ENCODE measurements at regions of chr2 and their contacts with region 1.

Region 1: DNA sequence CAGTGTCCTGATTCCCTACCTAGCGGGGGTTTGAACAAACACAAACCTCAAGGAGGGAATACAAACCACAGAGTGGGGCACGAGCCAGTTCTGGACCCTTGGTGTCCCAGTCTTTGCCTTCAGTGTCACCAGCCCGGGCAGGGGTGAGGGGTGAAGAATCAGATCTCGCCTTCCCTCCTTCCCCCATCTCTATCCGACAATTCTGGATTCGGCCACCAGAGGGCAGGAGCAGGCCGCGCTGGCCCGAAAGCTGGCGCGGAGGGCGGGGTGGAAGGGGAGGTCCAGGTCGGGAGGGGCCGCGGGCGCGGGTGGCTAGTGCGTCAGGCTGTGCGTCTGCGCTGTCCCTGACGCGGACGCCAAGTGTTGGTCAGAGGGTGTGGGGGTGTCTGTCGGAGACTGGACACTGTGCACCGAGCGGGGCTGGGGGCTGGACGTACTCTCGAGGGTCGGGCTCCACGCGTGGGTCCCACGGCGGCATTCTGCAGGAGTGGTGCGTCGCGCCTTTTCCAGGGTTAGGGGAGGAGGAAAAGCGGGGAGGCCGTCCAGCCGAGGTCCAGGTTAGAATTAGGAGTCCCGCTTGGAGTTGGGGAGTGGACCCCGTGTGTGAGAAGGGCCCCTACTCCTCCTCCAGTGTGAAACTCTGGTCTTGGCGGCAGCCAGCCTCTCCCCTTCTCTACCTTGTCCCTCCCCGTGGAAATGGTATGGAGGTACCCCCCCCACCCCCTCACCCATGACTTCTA is 2.9 kb upstream of the CRYBA2 start:
- DNase-seq: peak in 1 of 2 experiments; percentile 99
- H3K4me3 ChIP-seq: peak overlapping the region in 3 of 4 experiments; percentile 27 to 49 (median 34); a peak in 4 of 8 replicates
- H3K27ac ChIP-seq: no peak overlapping the region
- H3K4me1 ChIP-seq: peaks cover 0 to 43% (median 26%) of the 10 kb centered on the region in 4 experiments; a peak in 6 of 7 replicates
- H3K27me3 ChIP-seq: peaks cover 98 to 100% (median 99%) of the 10 kb centered on the region in 4 experiments
- CTCF ChIP-seq: peak in 2 of 3 experiments; percentile 88; a peak in 3 of 4 replicates
- EP300 ChIP-seq: 0 out of 3 replicates have a peak, but pooled peaks of 1 of the 2 experiments have one; percentile 20
- POLR2A ChIP-seq: no peak
- RAD21 ChIP-seq: peak; percentile 79 to 89

Region 2: GRCh38 chr2:218885981-218886947 is 109.9 kb before region 1 on chr2:
- CTCF ChIA-PET with region 1: interaction called, 11 read pairs
- POLR2A ChIA-PET with region 1: interaction called, 3 read pairs
- DNase-seq: no peak
- H3K4me3 ChIP-seq: no peak overlapping the region
- H3K27ac ChIP-seq: no peak overlapping the region
- H3K4me1 ChIP-seq: peaks cover 0 to 4% (median 2%) of the 10 kb centered on the region in 4 experiments; a peak in 4 of 7 replicates
- H3K27me3 ChIP-seq: peaks cover 76 to 93% (median 90%) of the 10 kb centered on the region in 4 experiments
- CTCF ChIP-seq: no peak
- EP300 ChIP-seq: no peak
- POLR2A ChIP-seq: no peak
- RAD21 ChIP-seq: no peak

Region 3: GRCh38 chr2:219109471-219109870 is 113.3 kb after region 1 on chr2:
- CTCF ChIA-PET with region 1: no interaction called
- POLR2A ChIA-PET with region 1: no interaction called
- DNase-seq: peak; percentile 27 to 54
- H3K4me3 ChIP-seq: no peak overlapping the region
- H3K27ac ChIP-seq: no peak overlapping the region
- H3K4me1 ChIP-seq: no peaks in the 10 kb centered on the region; a peak in 1 of 7 replicates
- H3K27me3 ChIP-seq: no peaks in the 10 kb centered on the region
- CTCF ChIP-seq: no peak
- EP300 ChIP-seq: no peak
- POLR2A ChIP-seq: no peak
- RAD21 ChIP-seq: no peak

Measured in H1 (cell line).